Activated CD4-positive, alpha-beta memory T cell treated with anti-CD3 and anti-CD28 coated beads for 36 hours (primary cell): ENCODE measurements at regions of chr16 and their contacts with region 1.

Region 1: GRCh38 chr16:25224731-25225319 is 8.1 kb downstream of the AQP8 start:
- DNase-seq: no peak
- H3K4me3 Mint-ChIP-seq: no peak overlapping the region
- H3K27ac Mint-ChIP-seq: no peak overlapping the region
- H3K4me1 Mint-ChIP-seq: no peaks in the 10 kb centered on the region
- H3K27me3 Mint-ChIP-seq: no peaks in the 10 kb centered on the region

Region 2: DNA sequence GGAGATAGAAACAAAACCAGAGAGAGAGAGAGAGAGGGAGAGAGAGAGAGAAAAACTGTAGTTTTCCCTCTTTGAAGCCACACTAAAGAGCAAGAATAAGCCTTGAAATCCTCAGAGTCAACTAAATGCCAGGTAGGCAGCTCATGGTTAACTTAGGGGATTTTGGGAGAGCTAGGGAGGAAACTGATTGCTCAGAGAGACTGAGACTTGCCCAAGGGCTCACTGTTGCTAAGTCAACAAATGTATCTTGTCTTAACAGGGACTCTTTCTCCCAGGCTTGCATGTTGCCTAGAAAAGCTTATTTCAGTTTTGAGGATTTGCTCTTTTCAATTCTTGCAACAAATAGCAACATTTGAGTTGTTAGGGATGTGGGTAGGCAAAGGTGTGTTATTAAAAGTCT is 383.5 kb before region 1 on chr16:
- CTCF ChIA-PET with region 1: no interaction called
- POLR2A ChIA-PET with region 1: no interaction called
- intact Hi-C with region 1: no loop called
- DNase-seq: no peak
- H3K4me3 Mint-ChIP-seq: no peak overlapping the region
- H3K27ac Mint-ChIP-seq: no peak overlapping the region
- H3K4me1 Mint-ChIP-seq: no peaks in the 10 kb centered on the region
- H3K27me3 Mint-ChIP-seq: no peaks in the 10 kb centered on the region

Region 3: GRCh38 chr16:25060920-25061319 is 163.9 kb before region 1 on chr16:
- CTCF ChIA-PET with region 1: interaction called, 40 read pairs
- POLR2A ChIA-PET with region 1: no interaction called
- intact Hi-C with region 1: no loop called
- DNase-seq: no peak
- H3K4me3 Mint-ChIP-seq: no peak overlapping the region
- H3K27ac Mint-ChIP-seq: peak overlapping the region; percentile 29
- H3K4me1 Mint-ChIP-seq: peaks cover 31% of the 10 kb centered on the region
- H3K27me3 Mint-ChIP-seq: no peaks in the 10 kb centered on the region

Region 4: GRCh38 chr16:25126820-25127232 is 98.0 kb before region 1 on chr16:
- CTCF ChIA-PET with region 1: interaction called, 74 read pairs
- POLR2A ChIA-PET with region 1: interaction called, 3 read pairs
- intact Hi-C with region 1: loop called (anchors 1 kb)
- DNase-seq: peak; percentile 76
- H3K4me3 Mint-ChIP-seq: no peak overlapping the region
- H3K27ac Mint-ChIP-seq: peak overlapping the region; percentile 48
- H3K4me1 Mint-ChIP-seq: peaks cover 32% of the 10 kb centered on the region
- H3K27me3 Mint-ChIP-seq: no peaks in the 10 kb centered on the region

Region 5: DNA sequence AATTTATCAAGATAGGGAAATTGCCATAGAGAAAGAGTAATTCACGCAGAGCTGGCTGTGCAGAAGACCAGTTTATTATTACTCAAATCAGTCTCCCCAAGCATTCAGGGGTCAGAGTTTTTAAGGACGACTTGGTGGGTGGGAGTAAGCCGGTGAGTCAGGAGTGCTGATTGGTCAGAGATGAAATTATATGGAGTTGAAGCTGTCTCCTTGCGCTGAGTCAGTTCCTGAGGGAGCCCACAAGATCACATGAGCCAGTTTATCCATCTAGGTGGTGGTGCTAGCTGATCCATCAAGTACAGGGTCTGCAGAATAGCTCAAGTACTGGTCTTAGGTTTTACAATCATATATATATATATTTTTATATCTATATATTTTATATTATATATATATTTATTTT is 14.1 kb before region 1 on chr16:
- CTCF ChIA-PET with region 1: interaction called, 20 read pairs
- POLR2A ChIA-PET with region 1: no interaction called
- intact Hi-C with region 1: no loop called
- DNase-seq: peak; percentile 23
- H3K4me3 Mint-ChIP-seq: no peak overlapping the region
- H3K27ac Mint-ChIP-seq: no peak overlapping the region
- H3K4me1 Mint-ChIP-seq: peaks cover 3% of the 10 kb centered on the region
- H3K27me3 Mint-ChIP-seq: no peaks in the 10 kb centered on the region